Pancreas (tissue), 10 donors: ENCODE measurements at regions of chr11 and their contacts with region 1.

Region 1: GRCh38 chr11:46238967-46239800 is 38.3 kb upstream of the CREB3L1 start:
- DNase-seq: peak; percentile 73 to 94 (median 84)
- ATAC-seq: peak; percentile 78 to 89 (median 84)
- H3K4me3 ChIP-seq: peak overlapping the region in 2 of 4 donors; percentile 40 to 59
- H3K27ac ChIP-seq: peak overlapping the region in 1 of 4 donors; percentile 67
- H3K4me1 ChIP-seq: peaks cover 0 to 13% (median 7%) of the 10 kb centered on the region in 3 donors
- H3K27me3 ChIP-seq: no peaks in the 10 kb centered on the region
- CTCF ChIP-seq: peak; percentile 98 to 99 (median 99)

Region 2: DNA sequence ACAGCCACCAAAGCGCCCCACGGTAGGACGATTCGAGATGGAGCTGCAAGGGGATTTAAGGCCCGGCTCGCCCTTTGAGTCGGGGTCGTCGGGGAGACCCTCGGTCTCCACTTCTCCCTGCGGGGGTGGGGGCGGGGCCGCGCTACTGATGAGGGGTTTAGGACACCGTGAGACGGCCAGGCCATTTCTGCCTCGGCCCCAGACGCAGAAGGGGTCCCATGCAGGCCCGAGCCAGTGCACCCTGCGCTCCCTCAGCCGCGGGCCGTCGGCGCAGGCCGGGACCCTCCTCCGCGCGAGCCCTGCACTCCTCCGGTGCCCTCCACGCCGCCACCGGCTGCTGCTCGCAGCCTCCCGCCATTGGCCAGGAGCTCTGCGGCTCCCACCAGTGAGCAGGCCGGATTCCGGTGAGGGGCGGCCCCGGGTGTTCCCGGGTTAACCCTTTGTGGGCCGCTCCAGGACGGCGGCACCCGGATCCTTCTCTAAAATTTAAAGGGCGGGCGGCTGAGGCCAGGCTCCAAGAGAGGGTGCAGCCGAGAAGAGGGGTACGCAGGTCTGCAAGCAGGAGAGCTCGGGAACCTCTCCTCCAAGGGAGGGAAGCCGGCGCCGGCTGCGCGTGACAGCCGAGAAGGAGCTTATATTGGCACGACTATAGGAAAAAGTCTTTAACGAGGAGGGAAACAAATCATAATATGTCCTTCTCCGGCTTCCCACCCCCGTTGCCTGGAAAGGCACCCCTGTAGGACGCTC is 56.3 kb after region 1 on chr11:
- intact Hi-C with region 1: loop called in 1 of 3 experiments (anchors 5 kb)
- DNase-seq: peak in 5 of 6 donors; percentile 62 to 89 (median 70)
- ATAC-seq: peak; percentile 42 to 91 (median 86)
- H3K4me3 ChIP-seq: peak overlapping the region; percentile 16 to 35 (median 34)
- H3K27ac ChIP-seq: no peak overlapping the region
- H3K4me1 ChIP-seq: peaks cover 0 to 5% (median 4%) of the 10 kb centered on the region in 3 donors
- H3K27me3 ChIP-seq: no peaks in the 10 kb centered on the region
- CTCF ChIP-seq: no peak

Region 3: DNA sequence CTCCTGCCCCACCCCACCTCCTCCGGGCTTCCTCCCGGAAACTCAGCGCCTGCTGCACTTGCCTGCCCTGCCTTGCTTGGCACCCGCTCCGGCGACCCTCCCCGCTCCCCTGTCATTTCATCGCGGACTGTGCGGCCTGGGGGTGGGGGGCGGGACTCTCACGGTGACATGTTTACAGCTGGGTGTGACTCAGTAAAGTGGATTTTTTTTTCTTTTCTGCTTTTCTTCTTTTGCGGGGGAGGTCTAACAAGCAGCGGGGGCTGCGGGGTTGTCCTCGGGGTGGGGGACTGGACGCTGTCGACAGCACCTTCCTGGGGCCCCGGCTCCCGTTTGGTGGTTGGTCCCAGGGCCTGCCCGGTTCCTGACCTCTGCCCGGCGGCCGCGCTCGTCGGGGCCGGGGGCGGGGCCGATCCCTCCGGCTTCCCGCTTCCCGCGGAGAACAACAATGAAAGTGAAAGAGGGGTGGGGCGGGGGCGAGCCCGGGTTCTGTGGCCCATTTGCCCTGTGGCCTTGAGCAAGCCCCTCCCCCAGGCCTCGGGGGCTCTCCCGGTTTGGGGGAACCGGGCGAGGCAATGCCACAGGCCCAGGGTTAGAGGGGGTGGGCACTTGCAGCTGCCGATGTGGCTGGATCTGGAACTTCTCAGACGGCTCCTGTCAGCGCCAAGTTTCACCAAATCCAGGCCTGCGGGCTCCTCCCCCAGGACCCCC is 141.3 kb after region 1 on chr11:
- intact Hi-C with region 1: no loop called
- DNase-seq: peak; percentile 60 to 87 (median 78)
- ATAC-seq: peak; percentile 59 to 78 (median 72)
- H3K4me3 ChIP-seq: peak overlapping the region; percentile 53 to 69 (median 60)
- H3K27ac ChIP-seq: peak overlapping the region; percentile 7 to 85 (median 52)
- H3K4me1 ChIP-seq: peaks cover 0 to 6% (median 0%) of the 10 kb centered on the region in 3 donors
- H3K27me3 ChIP-seq: no peaks in the 10 kb centered on the region
- CTCF ChIP-seq: no peak